Activated CD8-positive, alpha-beta T cell treated with anti-CD3 and anti-CD28 coated beads for 36 hours (primary cell): ENCODE measurements at regions of chr14 and their contacts with region 1.

Region 1: DNA sequence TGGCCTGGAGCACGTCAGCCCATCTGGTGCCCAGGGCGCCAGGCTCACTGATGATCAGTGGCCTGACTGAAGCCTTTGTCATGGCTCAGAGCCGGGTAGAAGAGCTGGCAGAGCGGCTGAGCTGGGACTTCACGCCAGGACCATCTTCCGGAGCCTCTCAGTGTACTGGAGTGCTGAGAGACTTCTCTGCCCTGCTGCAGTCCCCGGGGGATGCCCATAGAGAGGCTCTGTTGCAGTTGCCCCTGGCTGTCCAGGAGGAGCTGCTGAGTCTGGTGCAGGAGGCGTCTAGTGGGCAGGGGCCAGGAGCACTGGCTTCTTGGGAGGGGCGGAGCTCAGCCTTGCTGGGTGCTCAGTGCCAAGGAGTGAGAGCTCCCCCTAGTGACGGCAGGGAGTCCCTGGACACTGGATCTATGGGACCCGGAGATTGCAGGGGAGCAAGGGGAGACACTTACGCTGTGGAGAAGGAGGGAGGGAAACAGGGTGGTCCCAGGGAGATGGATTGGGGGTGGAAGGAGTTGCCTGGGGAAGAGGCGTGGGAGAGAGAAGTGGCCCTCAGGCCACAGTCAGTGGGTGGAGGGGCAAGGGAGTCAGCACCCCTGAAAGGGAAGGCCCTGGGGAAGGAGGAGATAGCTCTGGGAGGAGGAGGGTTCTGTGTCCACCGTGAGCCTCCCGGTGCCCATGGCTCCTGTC is 2.0 kb downstream of the KHNYN start:
- DNase-seq: peak; percentile 95
- ATAC-seq: peak; percentile 65
- H3K4me3 Mint-ChIP-seq: peak overlapping the region; percentile 90
- H3K27ac Mint-ChIP-seq: peak overlapping the region; percentile 97
- H3K4me1 Mint-ChIP-seq: peaks cover 31% of the 10 kb centered on the region
- H3K27me3 Mint-ChIP-seq: no peaks in the 10 kb centered on the region
- CTCF ChIP-seq: peak; percentile 87

Region 2: DNA sequence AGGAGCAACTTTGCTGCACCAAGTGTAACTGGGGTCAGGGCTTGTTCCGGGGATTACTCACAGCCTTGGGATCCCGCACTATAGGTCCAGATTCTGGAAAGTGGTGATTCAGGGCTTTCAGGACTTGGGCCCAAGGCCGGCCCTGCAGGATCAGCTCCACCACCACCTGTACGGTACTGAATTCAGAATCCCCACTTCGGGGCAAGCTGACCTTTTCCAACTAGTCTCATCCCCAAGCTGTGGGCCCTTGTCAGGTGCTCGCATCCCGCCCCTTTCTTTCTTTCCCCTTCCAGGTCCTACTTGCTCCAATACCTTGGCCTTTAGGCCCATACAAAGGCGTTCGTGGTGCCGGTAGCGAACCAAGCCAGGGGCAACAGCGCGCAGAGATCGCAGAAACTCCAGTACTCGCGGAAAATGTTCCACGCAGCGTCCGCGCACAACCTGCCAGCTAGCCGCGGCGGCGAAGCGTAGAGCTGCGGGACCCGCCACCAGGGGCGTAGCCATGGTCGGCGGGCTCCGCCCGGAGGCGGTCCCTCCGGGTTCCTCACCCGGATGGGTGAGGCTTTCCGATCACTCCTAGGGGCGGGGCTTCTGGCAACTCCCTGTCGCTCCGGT is 189.8 kb before region 1 on chr14:
- CTCF ChIA-PET with region 1: interaction called, 19 read pairs
- POLR2A ChIA-PET with region 1: interaction called, 8 read pairs
- intact Hi-C with region 1: loop called (anchors 10 kb)
- DNase-seq: peak; percentile 93
- ATAC-seq: peak; percentile 84
- H3K4me3 Mint-ChIP-seq: peak overlapping the region; percentile 96
- H3K27ac Mint-ChIP-seq: peak overlapping the region; percentile 98
- H3K4me1 Mint-ChIP-seq: peaks cover 54% of the 10 kb centered on the region
- H3K27me3 Mint-ChIP-seq: no peaks in the 10 kb centered on the region
- CTCF ChIP-seq: no peak

Region 3: GRCh38 chr14:24324024-24324423 is 107.7 kb before region 1 on chr14:
- CTCF ChIA-PET with region 1: interaction called, 155 read pairs
- POLR2A ChIA-PET with region 1: interaction called, 82 read pairs
- intact Hi-C with region 1: no loop called
- DNase-seq: no peak
- ATAC-seq: no peak
- H3K4me3 Mint-ChIP-seq: no peak overlapping the region
- H3K27ac Mint-ChIP-seq: no peak overlapping the region
- H3K4me1 Mint-ChIP-seq: peaks cover 14% of the 10 kb centered on the region
- H3K27me3 Mint-ChIP-seq: no peaks in the 10 kb centered on the region
- CTCF ChIP-seq: no peak

Region 4: GRCh38 chr14:24360281-24360680 is 71.4 kb before region 1 on chr14:
- CTCF ChIA-PET with region 1: interaction called, 73 read pairs
- POLR2A ChIA-PET with region 1: interaction called, 19 read pairs
- intact Hi-C with region 1: loop called (anchors 5 kb)
- DNase-seq: no peak
- ATAC-seq: no peak
- H3K4me3 Mint-ChIP-seq: no peak overlapping the region
- H3K27ac Mint-ChIP-seq: no peak overlapping the region
- H3K4me1 Mint-ChIP-seq: peaks cover 4% of the 10 kb centered on the region
- H3K27me3 Mint-ChIP-seq: peaks cover 23% of the 10 kb centered on the region
- CTCF ChIP-seq: no peak

Region 5: GRCh38 chr14:24398653-24399446 is 32.9 kb before region 1 on chr14 and contains the start of gene NYNRIN:
- CTCF ChIA-PET with region 1: interaction called, 15 read pairs
- POLR2A ChIA-PET with region 1: no interaction called
- intact Hi-C with region 1: no loop called
- DNase-seq: peak; percentile 38
- ATAC-seq: peak; percentile 88
- H3K4me3 Mint-ChIP-seq: peak within 1 kb of the TSS; percentile 25
- H3K27ac Mint-ChIP-seq: no peak within 1 kb of the TSS
- H3K4me1 Mint-ChIP-seq: peaks cover 3% of the 10 kb centered on the region
- H3K27me3 Mint-ChIP-seq: peaks cover 9% of the 10 kb centered on the region
- CTCF ChIP-seq: no peak
- total RNA-seq, gene NYNRIN: 0.05 to 0.27 TPM

Region 6: GRCh38 chr14:24442273-24443052 is 10.7 kb after region 1 on chr14 and contains the start of gene SDR39U1:
- CTCF ChIA-PET with region 1: interaction called, 76 read pairs
- POLR2A ChIA-PET with region 1: interaction called, 74 read pairs
- intact Hi-C with region 1: no loop called
- DNase-seq: peak; percentile 98
- ATAC-seq: peak; percentile 91
- H3K4me3 Mint-ChIP-seq: peak within 1 kb of the TSS; percentile 86
- H3K27ac Mint-ChIP-seq: peak within 1 kb of the TSS; percentile 98
- H3K4me1 Mint-ChIP-seq: peaks cover 40% of the 10 kb centered on the region
- H3K27me3 Mint-ChIP-seq: no peaks in the 10 kb centered on the region
- CTCF ChIP-seq: no peak
- total RNA-seq, gene SDR39U1: 43.6 to 55.5 TPM